Activated T-helper 1 cell treated with anti-CD3 and anti-CD28 coated beads, Interleukin-12 subunit alpha, Interleukin-12 subunit beta, Interleukin-2, Interleukin-4 antibody, amounts not matched to agents 30 ng/mL and 10 ng/mL and 1 ng/mL, durations not matched to agents 14 hours and 24 hours and 36 hours (primary cell): ENCODE measurements at regions of chr7 and their contacts with region 1.

Region 1: DNA sequence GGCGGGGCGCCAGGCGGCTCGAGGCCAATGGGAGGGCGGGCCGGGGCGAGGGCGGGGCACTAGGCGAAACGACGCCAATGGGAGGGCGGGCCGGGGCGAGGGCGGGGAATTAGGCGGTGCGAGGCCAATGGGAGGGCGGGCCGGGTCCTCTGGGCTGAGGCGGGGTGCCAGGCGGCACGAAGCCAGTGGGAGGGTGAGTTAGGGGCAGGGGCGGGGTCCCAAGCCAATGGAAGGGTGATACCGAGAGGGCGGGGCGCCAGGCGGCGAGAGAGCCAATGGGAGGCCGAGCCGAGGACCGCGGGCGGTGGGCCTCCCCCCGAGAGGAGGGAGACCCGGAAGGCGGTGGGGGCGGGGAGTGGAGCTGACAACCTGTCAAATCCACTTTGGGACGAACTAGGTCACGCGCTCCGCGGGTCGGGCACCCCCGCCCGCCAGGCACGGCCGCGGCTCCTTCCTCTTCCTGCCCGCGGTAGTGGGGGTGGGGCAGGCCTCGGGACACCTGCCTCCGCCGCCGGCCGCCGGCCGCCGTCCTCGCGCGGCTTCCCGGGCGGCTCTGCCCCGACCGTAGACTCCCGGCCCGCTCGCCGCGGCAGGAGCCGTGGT is 28.0 kb upstream of the KMT2C start:
- DNase-seq: peak; percentile 100
- H3K4me3 Mint-ChIP-seq: peak overlapping the region; percentile 92
- H3K27ac Mint-ChIP-seq: no peak overlapping the region
- H3K4me1 Mint-ChIP-seq: peaks cover 10% of the 10 kb centered on the region
- H3K27me3 Mint-ChIP-seq: peaks cover 3% of the 10 kb centered on the region

Region 2: DNA sequence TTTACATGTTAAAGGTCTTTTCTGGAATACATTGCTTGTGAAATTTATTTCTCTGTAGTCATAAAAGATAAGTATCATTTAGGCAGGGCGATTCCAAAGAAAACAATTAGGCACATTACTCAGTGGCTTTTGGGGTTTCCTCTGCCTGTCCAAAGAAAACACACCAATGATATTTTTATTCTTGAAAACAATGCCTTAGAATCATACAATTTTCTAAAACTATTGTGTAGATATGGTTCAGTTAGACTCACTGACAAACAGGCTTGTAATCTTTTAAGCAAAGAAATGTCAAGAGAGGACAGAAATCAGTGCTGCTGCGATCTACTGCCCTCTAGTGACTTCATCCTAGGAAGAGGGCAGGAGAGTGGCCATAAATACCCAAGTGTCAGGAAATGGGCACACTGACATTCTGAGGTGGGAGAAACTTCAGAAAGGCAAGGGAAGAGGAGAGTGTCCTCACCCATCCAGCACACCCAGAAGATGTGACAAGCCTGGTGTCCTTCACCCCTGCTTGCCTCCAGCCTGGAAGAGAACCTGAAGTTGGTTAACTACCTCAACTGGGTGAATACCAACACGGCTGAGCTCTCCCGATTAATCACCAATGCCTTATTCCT is 317.9 kb before region 1 on chr7:
- intact Hi-C with region 1: loop called (anchors 2 kb)
- DNase-seq: no peak
- H3K4me3 Mint-ChIP-seq: no peak overlapping the region
- H3K27ac Mint-ChIP-seq: peak overlapping the region; percentile 80
- H3K4me1 Mint-ChIP-seq: peaks cover 40% of the 10 kb centered on the region
- H3K27me3 Mint-ChIP-seq: no peaks in the 10 kb centered on the region

Region 3: GRCh38 chr7:152336754-152337368 is 126.9 kb before region 1 on chr7:
- intact Hi-C with region 1: loop called (anchors 1 kb)
- DNase-seq: peak; percentile 2
- H3K4me3 Mint-ChIP-seq: peak overlapping the region; percentile 53
- H3K27ac Mint-ChIP-seq: no peak overlapping the region
- H3K4me1 Mint-ChIP-seq: peaks cover 23% of the 10 kb centered on the region
- H3K27me3 Mint-ChIP-seq: no peaks in the 10 kb centered on the region

Region 4: GRCh38 chr7:152424348-152425108 is 39.3 kb before region 1 on chr7:
- intact Hi-C with region 1: loop called (anchors 5 kb)
- DNase-seq: no peak
- H3K4me3 Mint-ChIP-seq: no peak overlapping the region
- H3K27ac Mint-ChIP-seq: peak overlapping the region; percentile 66
- H3K4me1 Mint-ChIP-seq: peaks cover 45% of the 10 kb centered on the region
- H3K27me3 Mint-ChIP-seq: no peaks in the 10 kb centered on the region

Region 5: GRCh38 chr7:152436111-152436930 is 27.5 kb before region 1 on chr7:
- intact Hi-C with region 1: loop called (anchors 1 kb)
- DNase-seq: peak; percentile 82
- H3K4me3 Mint-ChIP-seq: peak overlapping the region; percentile 76
- H3K27ac Mint-ChIP-seq: peak overlapping the region; percentile 72
- H3K4me1 Mint-ChIP-seq: peaks cover 26% of the 10 kb centered on the region
- H3K27me3 Mint-ChIP-seq: peaks cover 1% of the 10 kb centered on the region

Region 6: DNA sequence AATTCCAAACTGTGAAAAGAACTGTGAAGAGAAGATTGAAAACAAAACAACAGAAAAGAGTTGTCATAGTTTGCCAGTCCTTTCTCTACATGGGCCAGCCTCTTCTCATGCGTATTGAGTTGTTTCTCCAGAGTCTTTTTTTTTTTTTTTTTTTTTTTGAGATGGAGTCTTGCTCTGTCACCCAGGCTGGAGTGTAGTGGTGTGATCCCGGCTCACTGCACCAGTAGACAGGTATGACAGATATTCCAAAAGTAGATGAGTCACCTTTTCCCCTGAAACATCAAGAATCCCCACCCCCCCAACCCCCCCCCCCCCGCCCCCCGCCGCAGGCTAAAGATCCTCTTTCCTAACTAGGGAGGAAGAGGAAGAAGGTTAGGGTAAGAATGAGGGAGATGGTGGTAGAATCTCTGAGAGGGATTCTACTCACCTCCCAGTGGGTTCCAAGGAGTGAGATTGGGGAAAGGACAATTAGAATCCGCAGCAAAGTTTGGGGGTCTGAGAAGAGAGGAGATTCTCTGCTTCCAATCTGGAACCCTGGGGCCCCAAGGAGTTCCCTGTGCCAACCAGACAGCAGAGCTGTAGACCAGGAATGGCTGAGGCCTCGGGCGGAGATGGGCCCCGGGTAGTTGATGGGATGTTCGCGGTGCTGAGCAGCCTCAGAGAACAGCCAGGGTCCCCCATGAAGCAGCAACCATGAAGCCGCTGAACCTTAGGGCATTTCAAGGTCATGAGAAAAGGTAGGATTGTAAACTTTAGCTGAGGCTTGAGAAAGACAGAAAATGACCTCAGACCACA is 12.3 kb before region 1 on chr7:
- intact Hi-C with region 1: no loop called
- DNase-seq: no peak
- H3K4me3 Mint-ChIP-seq: no peak overlapping the region
- H3K27ac Mint-ChIP-seq: no peak overlapping the region
- H3K4me1 Mint-ChIP-seq: no peaks in the 10 kb centered on the region
- H3K27me3 Mint-ChIP-seq: no peaks in the 10 kb centered on the region

Region 7: GRCh38 chr7:152675759-152676636 is 212.2 kb after region 1 on chr7 and contains the start of gene XRCC2:
- intact Hi-C with region 1: loop called (anchors 1 kb)
- DNase-seq: peak; percentile 94
- H3K4me3 Mint-ChIP-seq: peak within 1 kb of the TSS; percentile 92
- H3K27ac Mint-ChIP-seq: peak within 1 kb of the TSS; percentile 95
- H3K4me1 Mint-ChIP-seq: peaks cover 25% of the 10 kb centered on the region
- H3K27me3 Mint-ChIP-seq: no peaks in the 10 kb centered on the region
- total RNA-seq, gene XRCC2: 24.0 and 24.5 TPM in 2 replicates

Region 8: DNA sequence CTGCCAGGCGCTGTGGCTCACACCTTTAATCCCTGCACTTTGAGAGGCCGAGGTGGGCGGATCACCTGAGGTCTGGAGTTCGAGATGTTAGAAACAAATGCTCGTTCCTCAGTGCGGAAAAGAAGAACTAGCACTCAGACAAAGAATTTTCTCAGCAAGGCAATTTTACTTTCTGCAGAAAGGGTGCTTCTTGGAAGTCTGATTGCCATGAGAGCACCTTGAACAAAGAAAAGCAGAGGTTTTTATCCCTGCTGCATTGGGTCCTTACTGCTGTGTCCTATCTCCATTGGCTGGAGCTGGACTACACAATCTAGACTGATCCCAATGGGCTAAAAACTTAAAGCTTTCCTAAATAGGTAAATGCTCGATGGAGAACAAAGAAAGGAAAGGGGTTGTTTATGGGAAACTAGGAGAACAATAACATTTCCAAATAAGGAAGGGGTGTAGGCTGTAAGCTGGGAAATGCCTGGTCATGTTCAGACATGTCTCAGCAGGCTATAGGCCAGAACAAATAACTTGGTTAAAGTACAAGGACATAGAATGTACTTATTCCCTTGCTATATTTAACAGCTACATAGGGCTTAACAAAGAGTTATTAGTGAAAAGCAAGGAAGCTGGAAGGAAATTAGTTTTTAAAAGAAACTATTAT is 269.6 kb after region 1 on chr7:
- intact Hi-C with region 1: no loop called
- DNase-seq: no peak
- H3K4me3 Mint-ChIP-seq: no peak overlapping the region
- H3K27ac Mint-ChIP-seq: no peak overlapping the region
- H3K4me1 Mint-ChIP-seq: no peaks in the 10 kb centered on the region
- H3K27me3 Mint-ChIP-seq: no peaks in the 10 kb centered on the region

Region 9: GRCh38 chr7:152759949-152760853 is 296.4 kb after region 1 on chr7:
- intact Hi-C with region 1: loop called (anchors 1 kb)
- DNase-seq: no peak
- H3K4me3 Mint-ChIP-seq: peak overlapping the region; percentile 86
- H3K27ac Mint-ChIP-seq: peak overlapping the region; percentile 80
- H3K4me1 Mint-ChIP-seq: peaks cover 21% of the 10 kb centered on the region
- H3K27me3 Mint-ChIP-seq: peaks cover 2% of the 10 kb centered on the region